ENCODE measurements at regions of chr3 and their contacts with region 1.

Region 1: DNA sequence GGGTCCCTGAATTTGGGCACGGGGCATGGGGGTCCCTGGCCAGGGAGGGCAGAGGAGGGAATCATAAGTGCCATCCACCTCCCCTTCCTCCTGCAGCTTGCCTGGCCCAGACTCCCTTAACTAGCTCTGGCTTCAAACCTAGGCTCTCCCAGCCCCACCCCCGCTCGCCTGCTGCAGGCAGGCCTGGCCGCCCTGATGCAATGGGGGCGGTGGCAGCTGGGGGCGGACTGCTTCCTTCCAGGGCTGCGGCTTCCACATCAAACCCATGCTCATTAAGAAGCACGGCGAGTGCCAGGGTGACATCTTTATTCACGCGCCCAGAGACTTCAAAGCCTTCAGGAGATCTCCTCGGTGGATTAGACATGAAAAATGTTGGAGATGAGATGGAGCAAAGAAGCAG is 123.1 kb downstream of the TPRA1 start:
- DNase-seq: no peak
- ATAC-seq: no peak
- H3K4me3 ChIP-seq: no peak overlapping the region
- H3K27ac ChIP-seq: no peak overlapping the region
- H3K4me1 ChIP-seq: no peaks in the 10 kb centered on the region
- H3K27me3 ChIP-seq: no peaks in the 10 kb centered on the region
- CTCF ChIP-seq: no peak

Region 2: DNA sequence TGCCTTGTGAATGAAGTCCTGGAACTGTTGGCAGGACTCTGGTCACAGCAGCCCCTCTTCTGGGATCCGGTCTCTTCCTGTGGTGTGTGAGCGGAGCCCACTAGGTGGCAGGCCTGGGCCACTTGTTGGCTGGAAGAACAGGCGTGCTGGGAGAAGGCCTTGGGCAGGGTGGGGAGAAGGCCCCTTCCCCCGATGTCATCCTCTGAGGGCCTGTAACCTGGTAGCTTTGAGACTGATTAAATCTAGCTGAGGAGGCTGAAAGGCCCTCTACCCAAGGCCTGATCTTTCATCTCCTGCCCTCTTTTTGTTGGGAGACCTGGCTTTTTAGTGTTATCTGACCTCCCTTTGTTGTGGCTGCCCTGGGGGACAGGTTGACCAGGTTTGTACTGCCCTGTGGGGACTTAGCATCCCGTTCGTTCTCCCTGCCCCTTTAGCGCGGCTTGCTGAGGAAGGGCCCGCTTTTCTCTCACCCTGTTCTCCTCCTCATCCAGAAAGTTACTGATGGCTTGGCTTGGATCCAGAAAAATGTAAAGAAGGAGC is 715.0 kb before region 1 on chr3:
- intact Hi-C with region 1: loop called in 1 of 2 experiments (anchors 10 kb)
- DNase-seq: peak; percentile 73 to 89 (median 82)
- ATAC-seq: peak; percentile 88
- H3K4me3 ChIP-seq: no peak overlapping the region
- H3K27ac ChIP-seq: peak overlapping the region in 1 of 2 donors; percentile 28
- H3K4me1 ChIP-seq: peaks cover 4 to 10% of the 10 kb centered on the region in 2 donors
- H3K27me3 ChIP-seq: no peaks in the 10 kb centered on the region
- CTCF ChIP-seq: peak; percentile 75 to 76

Region 3: DNA sequence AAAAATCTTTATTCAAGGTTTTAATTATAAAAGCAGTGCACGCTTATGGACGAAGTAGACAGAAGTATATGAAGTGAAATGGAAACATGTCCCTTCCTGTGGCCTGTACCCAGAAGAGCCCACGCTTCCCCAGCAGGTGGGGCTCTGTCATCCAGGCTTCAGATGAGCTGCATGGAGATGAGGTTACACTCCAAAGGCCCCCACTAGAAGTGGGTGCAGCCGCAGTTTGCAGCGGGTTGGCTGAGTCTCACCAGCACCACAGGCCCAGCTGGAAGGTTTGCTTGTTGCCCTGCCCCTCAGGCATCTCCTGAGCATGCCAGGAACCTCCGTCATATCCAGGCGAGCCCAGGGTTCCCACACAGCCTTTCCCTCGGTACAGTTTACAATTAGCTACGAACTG is 212.7 kb before region 1 on chr3:
- intact Hi-C with region 1: loop called in 1 of 2 experiments (anchors 10 kb)
- DNase-seq: peak in 1 of 4 donors; percentile 60
- ATAC-seq: peak; percentile 61
- H3K4me3 ChIP-seq: no peak overlapping the region
- H3K27ac ChIP-seq: no peak overlapping the region
- H3K4me1 ChIP-seq: no peaks in the 10 kb centered on the region
- H3K27me3 ChIP-seq: no peaks in the 10 kb centered on the region
- CTCF ChIP-seq: peak in 1 of 2 donors; percentile 18

Region 4: DNA sequence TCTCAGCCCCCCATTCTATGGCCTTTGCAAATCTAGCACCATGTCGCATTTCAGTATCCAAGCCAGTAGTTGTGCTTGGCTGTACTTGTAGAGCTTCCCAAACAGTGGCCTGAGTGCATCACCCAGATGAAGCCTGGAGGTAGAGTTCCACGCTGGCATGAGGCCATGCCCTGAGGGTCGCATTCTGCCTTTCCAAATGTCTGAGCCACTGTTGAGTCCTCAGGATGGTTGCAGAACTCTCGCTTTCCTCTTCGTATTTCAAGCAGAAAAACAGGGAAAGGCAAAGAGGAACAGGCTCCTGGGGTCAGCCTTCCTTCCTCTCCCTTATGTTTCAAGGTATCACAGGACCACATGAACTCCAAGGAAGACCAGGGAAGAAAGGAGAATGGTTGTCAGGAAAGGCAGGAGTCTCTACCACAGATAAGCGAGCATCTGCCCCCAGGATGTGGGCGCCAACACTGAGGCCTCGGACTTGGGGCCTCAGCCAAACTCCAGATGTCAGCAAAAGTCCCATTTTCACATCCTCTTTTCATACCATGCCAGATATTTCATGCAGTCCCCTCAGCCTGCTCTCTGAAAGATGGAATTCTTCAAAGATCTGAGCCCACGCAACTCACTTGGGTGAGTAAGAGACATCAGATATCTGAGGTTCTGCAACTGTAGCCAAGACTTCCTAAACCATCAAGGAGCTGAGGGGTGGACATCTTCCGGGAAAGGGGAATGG is 160.1 kb before region 1 on chr3:
- intact Hi-C with region 1: no loop called
- DNase-seq: no peak
- ATAC-seq: no peak
- H3K4me3 ChIP-seq: no peak overlapping the region
- H3K27ac ChIP-seq: no peak overlapping the region
- H3K4me1 ChIP-seq: peaks cover 0 to 10% of the 10 kb centered on the region in 2 donors
- H3K27me3 ChIP-seq: peaks cover 0 to 9% of the 10 kb centered on the region in 2 donors
- CTCF ChIP-seq: no peak

Region 5: DNA sequence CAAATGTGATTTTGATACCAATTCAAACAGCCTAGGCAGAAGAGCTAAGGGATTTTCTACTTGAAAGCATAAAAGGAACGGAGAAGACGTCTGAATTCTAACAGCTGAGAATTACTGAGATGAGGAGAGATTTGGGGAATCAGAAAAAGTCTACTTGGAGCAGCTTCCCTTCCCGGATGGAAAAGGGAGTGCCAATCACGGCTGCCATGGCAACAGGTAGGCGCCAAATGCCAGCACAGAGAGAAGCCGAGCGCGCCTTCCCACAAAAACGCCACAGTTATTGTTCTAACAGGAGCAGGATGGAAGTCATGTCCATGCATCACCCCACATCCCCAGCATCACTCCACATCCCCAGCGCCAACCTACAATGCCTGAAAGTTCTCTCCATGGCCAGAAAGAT is 116.1 kb before region 1 on chr3:
- intact Hi-C with region 1: no loop called
- DNase-seq: no peak
- ATAC-seq: no peak
- H3K4me3 ChIP-seq: no peak overlapping the region
- H3K27ac ChIP-seq: no peak overlapping the region
- H3K4me1 ChIP-seq: no peaks in the 10 kb centered on the region
- H3K27me3 ChIP-seq: peaks cover 0 to 21% of the 10 kb centered on the region in 2 donors
- CTCF ChIP-seq: no peak